WTC11 (cell line): ENCODE measurements at regions of chr12 and their contacts with region 1.

Region 1: DNA sequence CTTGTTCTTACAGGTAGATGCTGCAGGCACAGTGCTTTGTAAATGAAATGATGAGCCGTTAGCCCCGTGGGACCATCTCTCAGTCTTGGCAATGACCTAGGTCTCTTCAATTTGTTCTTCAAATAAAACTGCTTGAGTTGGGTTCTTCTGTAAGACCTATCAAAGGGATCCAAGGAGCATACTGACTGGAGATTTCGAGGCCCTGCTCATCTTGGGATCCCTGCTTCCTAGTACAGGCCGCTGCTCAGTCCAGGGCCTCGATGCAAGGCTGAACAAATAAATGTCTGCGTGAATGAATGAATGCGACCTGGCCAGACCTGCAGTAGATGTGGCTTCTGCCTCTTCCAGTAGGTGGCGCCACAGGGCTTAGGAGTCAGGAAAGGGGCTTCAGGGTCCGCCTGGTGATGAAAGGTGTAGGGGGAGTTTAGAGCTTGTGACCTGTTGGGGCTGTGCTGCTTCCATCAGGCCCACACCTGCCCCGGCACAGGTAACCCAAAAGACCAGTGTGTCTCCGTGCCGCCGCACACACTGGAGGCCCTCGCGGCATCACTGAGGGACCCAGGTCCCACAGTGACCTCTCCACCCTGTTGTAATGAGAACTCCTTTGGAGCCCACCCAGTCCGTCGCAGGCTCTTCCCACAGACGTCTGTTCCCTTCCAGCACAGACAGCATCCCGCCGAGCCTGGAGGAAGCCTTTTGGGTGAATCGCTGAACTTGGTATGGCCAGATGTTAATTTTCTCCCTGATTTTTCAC is 4.4 kb downstream of the CACNA1C start:
- DNase-seq: peak; percentile 97
- ATAC-seq: peak; percentile 73
- H3K4me3 Mint-ChIP-seq: no peak overlapping the region
- H3K27ac Mint-ChIP-seq: no peak overlapping the region
- H3K4me1 Mint-ChIP-seq: peaks cover 27% of the 10 kb centered on the region
- H3K27me3 Mint-ChIP-seq: peaks cover 38% of the 10 kb centered on the region
- CTCF ChIP-seq: peak; percentile 90

Region 2: GRCh38 chr12:1776170-1776948 is 280.9 kb before region 1 on chr12:
- CTCF ChIA-PET with region 1: no interaction called
- POLR2A ChIA-PET with region 1: no interaction called
- DNase-seq: no peak
- ATAC-seq: peak; percentile 26; the same call in 1 of the 2 replicates
- H3K4me3 Mint-ChIP-seq: no peak overlapping the region
- H3K27ac Mint-ChIP-seq: peak overlapping the region; percentile 7
- H3K4me1 Mint-ChIP-seq: peaks cover 20% of the 10 kb centered on the region
- H3K27me3 Mint-ChIP-seq: no peaks in the 10 kb centered on the region
- CTCF ChIP-seq: no peak

Region 3: GRCh38 chr12:2101771-2102170 is 44.6 kb after region 1 on chr12:
- CTCF ChIA-PET with region 1: interaction called, 11 read pairs
- POLR2A ChIA-PET with region 1: no interaction called
- DNase-seq: no peak
- ATAC-seq: no peak
- H3K4me3 Mint-ChIP-seq: no peak overlapping the region
- H3K27ac Mint-ChIP-seq: no peak overlapping the region
- H3K4me1 Mint-ChIP-seq: 0 out of 2 replicates have a peak, but pooled peaks cover 6% of the 10 kb centered on the region
- H3K27me3 Mint-ChIP-seq: no peaks in the 10 kb centered on the region
- CTCF ChIP-seq: no peak

Region 4: DNA sequence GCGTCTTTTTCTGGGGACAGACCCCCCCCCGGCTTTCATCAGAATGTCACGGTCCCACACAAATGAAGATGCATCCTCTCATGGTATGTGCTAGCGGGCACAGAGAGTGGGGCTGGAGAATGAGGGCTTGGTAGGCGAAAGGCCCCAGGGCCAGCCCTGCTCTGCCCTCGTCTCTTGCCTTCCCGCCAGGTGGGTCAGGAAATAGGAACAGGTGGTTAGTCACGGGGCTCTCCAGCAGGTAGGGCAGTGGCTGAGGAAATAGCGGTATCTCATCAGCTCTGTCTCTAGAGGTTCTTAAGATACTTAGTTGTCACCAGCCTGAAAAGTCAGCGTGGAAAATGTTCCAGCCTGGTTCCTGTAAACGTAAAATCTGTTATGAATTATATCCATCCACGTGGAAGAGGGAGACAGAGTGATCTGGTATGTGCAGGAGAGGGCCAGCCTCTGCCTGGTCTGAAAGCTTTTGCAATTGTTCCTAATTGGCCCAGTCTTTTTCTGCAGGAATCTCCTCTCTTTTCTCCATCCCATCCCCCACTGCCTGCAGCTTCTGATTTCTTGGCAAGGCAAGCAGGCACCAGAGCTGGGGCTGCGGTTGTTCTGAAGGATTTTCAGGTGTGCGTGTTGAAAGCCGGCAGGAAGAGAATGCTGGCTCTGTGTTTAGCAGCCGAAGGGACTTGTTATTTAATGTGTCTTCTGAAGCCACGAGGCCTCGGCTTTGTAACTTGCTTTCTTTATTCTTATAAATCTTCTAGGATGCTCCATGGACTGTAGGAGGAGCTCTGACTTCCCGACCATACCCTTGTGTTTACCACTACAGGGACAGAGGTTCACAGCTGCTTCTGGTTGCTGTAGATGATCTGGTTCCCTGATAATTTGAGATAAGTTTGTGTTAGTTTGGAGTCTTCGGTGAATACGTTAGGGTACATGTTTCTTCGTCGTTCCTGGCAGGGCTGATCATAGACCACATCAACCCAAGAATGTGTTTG is 126.6 kb after region 1 on chr12:
- CTCF ChIA-PET with region 1: interaction called, 13 read pairs
- POLR2A ChIA-PET with region 1: no interaction called
- DNase-seq: no peak
- ATAC-seq: peak; percentile 71
- H3K4me3 Mint-ChIP-seq: no peak overlapping the region
- H3K27ac Mint-ChIP-seq: peak overlapping the region; percentile 54; the same call in 1 of the 2 replicates
- H3K4me1 Mint-ChIP-seq: peaks cover 35% of the 10 kb centered on the region
- H3K27me3 Mint-ChIP-seq: no peaks in the 10 kb centered on the region
- CTCF ChIP-seq: no peak

Region 5: DNA sequence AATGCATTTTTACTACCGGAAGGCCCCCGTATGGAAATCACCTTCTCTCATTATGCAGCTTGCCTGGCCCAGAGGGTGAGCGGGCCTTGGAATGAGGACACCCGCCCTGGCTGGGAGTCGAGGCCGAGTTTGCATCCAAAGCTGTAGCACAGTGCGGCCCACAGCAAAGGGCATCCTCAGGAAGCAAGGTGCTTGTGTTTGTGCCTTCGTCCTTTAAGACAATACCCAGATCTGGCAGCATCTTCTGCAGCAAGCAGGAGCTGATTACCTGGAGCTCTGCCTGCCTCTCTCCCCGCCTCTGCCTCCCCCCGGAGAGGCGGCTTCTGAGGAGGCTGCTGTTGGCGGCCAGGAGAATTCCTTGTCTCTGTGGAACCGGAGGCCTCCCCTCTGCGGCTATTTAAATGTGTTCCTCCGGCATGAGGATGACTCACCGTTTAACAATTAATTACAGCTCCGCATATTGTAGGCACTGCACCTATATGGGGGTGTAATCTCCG is 140.8 kb after region 1 on chr12:
- CTCF ChIA-PET with region 1: interaction called, 15 read pairs
- POLR2A ChIA-PET with region 1: no interaction called
- DNase-seq: peak; percentile 69
- ATAC-seq: peak; percentile 88
- H3K4me3 Mint-ChIP-seq: peak overlapping the region; percentile 61
- H3K27ac Mint-ChIP-seq: peak overlapping the region; percentile 96
- H3K4me1 Mint-ChIP-seq: peaks cover 67% of the 10 kb centered on the region
- H3K27me3 Mint-ChIP-seq: no peaks in the 10 kb centered on the region
- CTCF ChIP-seq: no peak

Region 6: DNA sequence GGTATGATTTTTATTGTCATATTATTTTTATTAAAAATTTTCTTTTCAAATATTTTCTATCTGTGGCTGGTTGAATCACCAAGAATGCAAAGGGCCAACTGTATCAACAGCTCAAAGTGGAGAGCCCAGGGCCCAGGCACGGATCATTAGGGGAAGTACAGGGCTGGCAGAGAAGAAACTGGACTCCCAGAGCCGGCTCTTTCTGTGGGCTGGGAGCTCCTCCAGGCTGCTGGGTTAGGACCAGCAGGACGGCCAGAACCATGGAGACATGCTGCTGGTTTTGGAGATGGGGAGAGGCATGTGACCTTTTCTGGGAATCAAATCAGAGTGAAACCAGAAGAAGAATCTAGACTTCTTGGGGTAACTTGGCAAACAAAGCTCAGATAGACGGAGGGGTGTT is 216.1 kb after region 1 on chr12:
- CTCF ChIA-PET with region 1: interaction called, 12 read pairs
- POLR2A ChIA-PET with region 1: no interaction called
- DNase-seq: no peak
- ATAC-seq: no peak
- H3K4me3 Mint-ChIP-seq: no peak overlapping the region
- H3K27ac Mint-ChIP-seq: no peak overlapping the region
- H3K4me1 Mint-ChIP-seq: peaks cover 5% of the 10 kb centered on the region
- H3K27me3 Mint-ChIP-seq: no peaks in the 10 kb centered on the region
- CTCF ChIP-seq: no peak

Region 7: DNA sequence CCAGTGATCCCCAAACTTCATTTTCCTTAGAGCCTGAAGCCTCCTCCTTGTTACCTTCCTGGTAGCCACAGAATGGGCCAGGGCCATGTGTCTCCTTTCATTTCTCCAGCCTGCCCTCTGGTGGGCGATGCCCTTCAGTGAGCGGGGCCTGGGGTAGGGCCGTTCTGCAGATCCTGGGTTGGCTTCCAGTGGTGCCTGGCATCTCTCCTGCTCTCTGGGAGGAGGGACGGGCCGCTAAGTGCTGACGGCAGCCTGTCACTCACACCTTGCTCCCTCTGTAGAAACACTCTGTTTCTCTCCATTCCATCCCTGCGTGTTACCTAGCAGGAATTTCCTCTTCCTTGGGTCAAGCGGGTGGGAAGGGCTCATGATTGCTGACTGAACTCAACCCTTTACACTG is 227.6 kb after region 1 on chr12:
- CTCF ChIA-PET with region 1: interaction called, 169 read pairs
- POLR2A ChIA-PET with region 1: no interaction called
- DNase-seq: peak; percentile 89
- ATAC-seq: peak; percentile 89
- H3K4me3 Mint-ChIP-seq: no peak overlapping the region
- H3K27ac Mint-ChIP-seq: no peak overlapping the region
- H3K4me1 Mint-ChIP-seq: peaks cover 70% of the 10 kb centered on the region
- H3K27me3 Mint-ChIP-seq: peaks cover 3% of the 10 kb centered on the region; the same call in 1 of the 2 replicates
- CTCF ChIP-seq: peak; percentile 67

Region 8: DNA sequence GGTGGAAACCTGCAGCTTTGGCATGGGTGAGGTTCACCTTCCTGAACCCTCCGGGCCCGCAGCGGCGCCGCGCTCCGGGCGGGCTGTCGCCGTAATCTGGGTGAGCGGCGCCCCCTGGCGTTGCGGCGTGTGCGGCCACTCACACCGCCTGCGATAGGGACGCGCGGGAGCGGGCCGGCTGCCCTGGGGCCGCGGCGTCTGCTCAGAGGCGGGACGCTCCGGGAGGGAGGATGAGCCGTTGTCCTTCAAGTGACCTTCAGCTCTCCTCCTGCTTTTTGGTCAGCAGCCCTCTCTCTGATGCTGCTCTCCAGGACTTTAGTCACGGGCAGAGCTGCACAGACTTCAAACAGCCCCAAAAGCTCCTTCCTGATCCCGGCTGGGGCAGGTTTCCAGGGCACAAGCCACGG is 525.9 kb after region 1 on chr12:
- CTCF ChIA-PET with region 1: interaction called, 13 read pairs
- POLR2A ChIA-PET with region 1: no interaction called
- DNase-seq: peak; percentile 79
- ATAC-seq: peak; percentile 89
- H3K4me3 Mint-ChIP-seq: no peak overlapping the region
- H3K27ac Mint-ChIP-seq: no peak overlapping the region
- H3K4me1 Mint-ChIP-seq: peaks cover 20% of the 10 kb centered on the region
- H3K27me3 Mint-ChIP-seq: peaks cover 33% of the 10 kb centered on the region
- CTCF ChIP-seq: peak; percentile 91